WTC11 (cell line): ENCODE measurements at regions of chr7 and their contacts with region 1.

Region 1: GRCh38 chr7:102433219-102434038 is at the start of gene ORAI2:
- DNase-seq: peak; percentile 75
- ATAC-seq: peak; percentile 53
- H3K4me3 Mint-ChIP-seq: peak within 1 kb of the TSS; percentile 75
- H3K27ac Mint-ChIP-seq: no peak within 1 kb of the TSS; the same call in 1 of the 2 replicates
- H3K4me1 Mint-ChIP-seq: peaks cover 29% of the 10 kb centered on the region
- H3K27me3 Mint-ChIP-seq: no peaks in the 10 kb centered on the region
- CTCF ChIP-seq: no peak
- total RNA-seq, gene ORAI2: 22.2 to 25.9 TPM (median 24.7 TPM) in 3 replicates

Region 2: GRCh38 chr7:102140952-102141370 is 292.5 kb before region 1 on chr7:
- CTCF ChIA-PET with region 1: no interaction called
- POLR2A ChIA-PET with region 1: interaction called, 10 read pairs
- DNase-seq: no peak
- ATAC-seq: no peak
- H3K4me3 Mint-ChIP-seq: no peak overlapping the region
- H3K27ac Mint-ChIP-seq: peak overlapping the region; percentile 50
- H3K4me1 Mint-ChIP-seq: peaks cover 6% of the 10 kb centered on the region
- H3K27me3 Mint-ChIP-seq: no peaks in the 10 kb centered on the region
- CTCF ChIP-seq: no peak

Region 3: GRCh38 chr7:102248456-102249395 is 184.7 kb before region 1 on chr7:
- CTCF ChIA-PET with region 1: no interaction called
- POLR2A ChIA-PET with region 1: no interaction called
- DNase-seq: peak; percentile 77
- ATAC-seq: peak; percentile 75
- H3K4me3 Mint-ChIP-seq: no peak overlapping the region
- H3K27ac Mint-ChIP-seq: no peak overlapping the region
- H3K4me1 Mint-ChIP-seq: peaks cover 9% of the 10 kb centered on the region
- H3K27me3 Mint-ChIP-seq: no peaks in the 10 kb centered on the region
- CTCF ChIP-seq: 0 out of 2 replicates have a peak, but pooled peaks have one; percentile 13

Region 4: DNA sequence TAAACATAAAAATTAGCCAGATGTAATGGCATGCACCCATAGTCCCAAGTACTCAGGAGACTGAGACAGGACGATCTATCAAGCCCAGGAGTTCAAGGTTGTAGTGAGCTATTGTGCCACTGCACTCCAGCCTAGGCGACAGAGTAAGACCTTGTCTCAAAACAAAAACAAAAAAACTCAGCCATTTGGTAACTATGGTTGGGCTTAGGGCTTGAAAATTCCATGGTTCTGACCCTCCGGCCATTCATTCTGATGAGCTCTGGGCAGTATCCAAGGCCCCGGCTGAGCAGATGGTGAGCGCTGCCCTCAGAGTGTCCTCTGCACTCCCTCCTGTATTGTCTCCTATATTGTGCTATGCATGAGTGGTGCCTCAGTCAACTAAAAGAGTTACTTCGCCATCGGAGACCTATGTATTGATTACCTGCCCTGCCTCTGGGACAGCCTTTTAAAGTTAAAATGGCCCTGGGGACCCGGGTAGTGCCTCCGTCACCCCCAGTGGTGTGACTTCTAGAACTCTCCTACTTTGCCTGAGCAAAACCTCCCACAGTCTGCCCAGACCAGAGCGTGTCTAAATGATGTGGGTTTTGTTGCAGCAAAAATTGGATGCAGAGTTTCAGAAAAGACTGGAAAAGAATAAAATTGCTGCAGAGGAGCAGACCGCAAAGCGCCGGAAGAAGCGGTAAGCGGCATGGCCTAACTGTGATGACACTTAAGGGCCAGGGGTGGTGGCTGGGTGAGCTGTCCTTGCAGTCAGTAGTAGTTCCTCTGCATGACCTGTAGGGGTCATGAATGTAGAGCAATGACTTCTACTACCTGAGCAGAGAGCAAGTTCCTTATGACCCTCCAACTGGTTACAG is 29.2 kb before region 1 on chr7:
- CTCF ChIA-PET with region 1: interaction called, 21 read pairs
- POLR2A ChIA-PET with region 1: no interaction called
- DNase-seq: peak; percentile 53
- ATAC-seq: peak; percentile 100
- H3K4me3 Mint-ChIP-seq: no peak overlapping the region
- H3K27ac Mint-ChIP-seq: peak overlapping the region; percentile 33; the same call in 1 of the 2 replicates
- H3K4me1 Mint-ChIP-seq: no peaks in the 10 kb centered on the region
- H3K27me3 Mint-ChIP-seq: no peaks in the 10 kb centered on the region
- CTCF ChIP-seq: peak; percentile 65

Region 5: GRCh38 chr7:102412548-102412947 is 20.9 kb before region 1 on chr7:
- CTCF ChIA-PET with region 1: interaction called, 10 read pairs
- POLR2A ChIA-PET with region 1: no interaction called
- DNase-seq: peak; percentile 66
- ATAC-seq: peak; percentile 90
- H3K4me3 Mint-ChIP-seq: no peak overlapping the region
- H3K27ac Mint-ChIP-seq: no peak overlapping the region; the same call in 1 of the 2 replicates
- H3K4me1 Mint-ChIP-seq: no peaks in the 10 kb centered on the region
- H3K27me3 Mint-ChIP-seq: no peaks in the 10 kb centered on the region; the same call in 1 of the 2 replicates
- CTCF ChIP-seq: peak; percentile 45